Body of pancreas (tissue), 4 donors: ENCODE measurements at regions of chr1 and their contacts with region 1.

Region 1: GRCh38 chr1:231512147-231512698 is 16.2 kb upstream of the TSNAX start:
- DNase-seq: no peak
- ATAC-seq: no peak
- H3K4me3 ChIP-seq: no peak overlapping the region
- H3K27ac ChIP-seq: no peak overlapping the region
- H3K4me1 ChIP-seq: no peaks in the 10 kb centered on the region
- H3K27me3 ChIP-seq: no peaks in the 10 kb centered on the region
- CTCF ChIP-seq: no peak
- POLR2A ChIP-seq: no peak

Region 2: GRCh38 chr1:231431665-231432415 is 80.4 kb before region 1 on chr1:
- intact Hi-C with region 1: loop called (anchors 10 kb)
- DNase-seq: no peak
- ATAC-seq: no peak
- H3K4me3 ChIP-seq: no peak overlapping the region
- H3K27ac ChIP-seq: no peak overlapping the region
- H3K4me1 ChIP-seq: no peaks in the 10 kb centered on the region
- H3K27me3 ChIP-seq: no peaks in the 10 kb centered on the region
- CTCF ChIP-seq: no peak
- POLR2A ChIP-seq: no peak